ENCODE measurements at regions of chr11 and their contacts with region 1.

Region 1: DNA sequence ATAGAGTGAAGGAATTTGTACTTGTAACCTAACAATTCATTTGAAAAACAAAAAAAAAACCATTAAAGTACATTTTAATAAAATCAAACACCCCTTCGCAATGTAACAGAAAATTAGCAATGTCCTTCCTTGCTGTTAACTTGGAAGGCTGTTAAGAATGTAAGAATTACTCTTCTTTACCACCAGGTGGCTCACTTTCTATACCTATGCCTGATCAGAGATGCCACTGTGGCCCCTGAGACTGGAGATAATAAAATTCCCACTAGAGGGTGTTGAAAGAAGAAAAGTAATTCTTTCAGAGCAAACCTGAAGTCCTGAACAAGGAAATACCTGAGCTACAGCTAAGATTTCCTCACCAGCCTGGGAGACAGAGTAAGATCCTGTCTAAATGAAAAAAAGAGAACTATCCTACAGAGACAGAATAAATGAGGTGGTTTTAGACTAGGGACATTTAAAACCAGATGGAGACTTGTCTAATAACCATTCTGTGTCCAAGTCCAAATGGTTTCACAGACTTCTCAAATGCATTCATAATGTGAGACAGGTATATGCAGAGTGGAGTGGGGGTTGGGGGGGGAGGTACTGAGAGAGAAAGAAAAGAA is 1089.3 kb downstream of the FAM181B start:
- DNase-seq: no peak
- ATAC-seq: no peak
- H3K4me3 ChIP-seq: no peak overlapping the region
- H3K27ac ChIP-seq: no peak overlapping the region
- H3K4me1 ChIP-seq: no peaks in the 10 kb centered on the region
- H3K27me3 ChIP-seq: peaks cover 0 to 10% (median 0%) of the 10 kb centered on the region in 7 donors
- CTCF ChIP-seq: peak in 8 of 9 donors; percentile 10 to 66 (median 56)

Region 2: DNA sequence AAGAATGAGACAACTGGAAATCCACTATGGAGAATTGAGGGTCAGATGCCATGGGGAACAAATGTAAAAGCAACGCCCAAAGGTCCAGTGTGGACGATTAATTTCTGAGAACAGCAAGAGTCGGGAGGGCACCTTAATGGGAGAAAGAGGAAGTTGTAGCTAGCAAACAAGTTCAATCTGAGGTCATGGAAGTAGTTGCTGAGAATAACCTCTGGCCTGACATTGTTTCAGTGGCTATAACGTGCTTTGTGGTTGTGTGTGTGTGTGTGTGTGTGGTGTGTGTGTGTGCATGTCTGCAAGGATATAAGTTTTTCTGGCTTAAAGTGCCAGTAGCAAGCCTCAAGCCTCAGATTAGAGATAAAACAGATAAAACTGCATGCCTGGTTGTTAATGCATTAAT is 573.4 kb before region 1 on chr11:
- intact Hi-C with region 1: no loop called
- DNase-seq: no peak
- ATAC-seq: no peak
- H3K4me3 ChIP-seq: no peak overlapping the region
- H3K27ac ChIP-seq: no peak overlapping the region
- H3K4me1 ChIP-seq: no peaks in the 10 kb centered on the region
- H3K27me3 ChIP-seq: no peaks in the 10 kb centered on the region
- CTCF ChIP-seq: no peak

Region 3: GRCh38 chr11:81548123-81548522 is 96.2 kb before region 1 on chr11:
- intact Hi-C with region 1: no loop called
- DNase-seq: no peak
- ATAC-seq: no peak
- H3K4me3 ChIP-seq: no peak overlapping the region
- H3K27ac ChIP-seq: no peak overlapping the region
- H3K4me1 ChIP-seq: no peaks in the 10 kb centered on the region
- H3K27me3 ChIP-seq: no peaks in the 10 kb centered on the region
- CTCF ChIP-seq: no peak

Region 4: DNA sequence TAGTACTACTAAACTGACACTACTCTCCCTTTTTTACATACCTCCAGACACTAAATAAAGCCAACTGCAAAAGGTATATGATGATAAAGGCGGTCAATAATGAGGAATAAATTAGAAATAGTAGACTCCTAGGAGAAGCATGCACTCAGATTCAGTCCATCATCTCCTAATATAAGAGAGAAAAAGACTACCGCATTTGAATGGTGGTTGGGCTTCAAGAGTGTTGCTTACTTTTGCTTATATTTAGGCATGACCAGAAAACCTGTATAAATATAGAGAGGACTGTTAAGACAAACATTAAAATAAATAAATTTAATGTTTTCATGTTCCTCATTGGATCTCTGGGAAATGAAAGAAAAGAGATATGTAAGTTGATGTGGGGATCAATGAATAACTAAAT is 47.6 kb before region 1 on chr11:
- intact Hi-C with region 1: no loop called
- DNase-seq: no peak
- ATAC-seq: no peak
- H3K4me3 ChIP-seq: no peak overlapping the region
- H3K27ac ChIP-seq: no peak overlapping the region
- H3K4me1 ChIP-seq: no peaks in the 10 kb centered on the region
- H3K27me3 ChIP-seq: no peaks in the 10 kb centered on the region
- CTCF ChIP-seq: no peak

Region 5: GRCh38 chr11:82229341-82229740 is 585.0 kb after region 1 on chr11:
- intact Hi-C with region 1: loop called in 1 of 10 experiments (anchors 5 kb)
- DNase-seq: no peak
- ATAC-seq: no peak
- H3K4me3 ChIP-seq: no peak overlapping the region
- H3K27ac ChIP-seq: no peak overlapping the region
- H3K4me1 ChIP-seq: no peaks in the 10 kb centered on the region
- H3K27me3 ChIP-seq: no peaks in the 10 kb centered on the region
- CTCF ChIP-seq: peak in 3 of 9 donors; percentile 9 to 25 (median 14)

Region 6: DNA sequence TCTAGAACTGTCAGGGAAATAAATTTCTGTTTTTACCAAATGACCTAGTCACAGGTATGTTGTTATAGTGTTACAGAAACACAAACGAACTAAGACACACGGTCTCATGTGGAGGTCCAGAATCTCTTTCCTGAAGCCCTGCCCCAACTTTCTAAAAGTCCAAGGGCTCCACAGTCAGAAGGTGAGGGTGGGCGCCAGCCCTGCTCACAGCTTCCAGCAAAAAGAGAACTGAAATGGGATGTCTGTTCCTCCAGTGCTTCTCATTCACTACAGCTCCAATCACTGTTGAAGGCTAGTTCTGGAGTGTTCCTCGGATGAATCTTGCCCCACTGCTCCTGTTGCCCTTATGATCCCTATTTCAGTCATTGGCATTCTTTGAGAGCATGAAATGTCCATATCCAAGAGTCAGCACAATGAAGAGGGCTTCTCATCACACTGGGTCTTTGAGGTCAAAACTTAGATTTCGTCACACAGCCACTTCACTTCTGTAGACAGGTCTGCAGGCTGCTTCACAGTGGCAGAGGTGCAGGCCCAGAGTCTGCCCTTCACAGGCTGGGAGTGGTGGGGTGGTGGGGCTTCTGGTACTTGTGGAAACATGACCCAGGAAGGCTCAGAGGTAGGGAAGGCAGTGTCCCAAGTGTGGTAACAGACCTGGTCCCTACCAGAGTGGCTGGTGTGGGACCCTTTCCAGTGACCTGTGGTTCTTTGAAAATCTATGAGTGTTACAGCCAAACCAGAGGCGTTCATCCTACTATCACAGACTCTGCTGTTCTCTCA is 1054.4 kb after region 1 on chr11:
- intact Hi-C with region 1: loop called in 5 of 10 experiments (anchors 10 kb)
- DNase-seq: no peak
- ATAC-seq: no peak
- H3K4me3 ChIP-seq: no peak overlapping the region
- H3K27ac ChIP-seq: no peak overlapping the region
- H3K4me1 ChIP-seq: no peaks in the 10 kb centered on the region
- H3K27me3 ChIP-seq: peaks cover 0 to 17% (median 6%) of the 10 kb centered on the region in 7 donors
- CTCF ChIP-seq: no peak

Measured in heart right ventricle (tissue), 16 donors.